ENCODE measurements at regions of chr5 and their contacts with region 1.

Region 1: DNA sequence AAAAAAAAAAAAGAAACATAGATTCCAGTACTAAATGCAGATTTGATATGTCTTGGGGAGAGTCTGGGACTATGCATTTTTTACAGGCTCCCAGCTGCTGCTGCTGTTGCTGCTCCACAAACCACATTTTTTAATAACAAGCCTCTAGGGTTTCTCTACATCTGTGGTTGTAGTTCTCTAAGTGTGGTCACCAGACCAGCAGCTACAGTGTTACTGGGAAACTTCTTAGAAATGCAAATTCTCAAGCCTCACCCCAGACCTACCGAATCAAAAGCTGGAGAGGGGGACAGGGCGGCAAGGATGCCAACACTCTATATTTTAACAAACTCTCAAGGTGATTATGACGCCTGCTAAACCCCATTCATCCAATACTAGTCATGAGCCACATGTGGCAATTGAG is 293.4 kb upstream of the PTGER4 start:
- DNase-seq: no peak
- H3K4me3 ChIP-seq: no peak overlapping the region
- H3K27ac ChIP-seq: peak overlapping the region; percentile 91
- H3K4me1 ChIP-seq: peaks cover 56% of the 10 kb centered on the region
- H3K27me3 ChIP-seq: no peaks in the 10 kb centered on the region
- CTCF ChIP-seq: no peak

Region 2: DNA sequence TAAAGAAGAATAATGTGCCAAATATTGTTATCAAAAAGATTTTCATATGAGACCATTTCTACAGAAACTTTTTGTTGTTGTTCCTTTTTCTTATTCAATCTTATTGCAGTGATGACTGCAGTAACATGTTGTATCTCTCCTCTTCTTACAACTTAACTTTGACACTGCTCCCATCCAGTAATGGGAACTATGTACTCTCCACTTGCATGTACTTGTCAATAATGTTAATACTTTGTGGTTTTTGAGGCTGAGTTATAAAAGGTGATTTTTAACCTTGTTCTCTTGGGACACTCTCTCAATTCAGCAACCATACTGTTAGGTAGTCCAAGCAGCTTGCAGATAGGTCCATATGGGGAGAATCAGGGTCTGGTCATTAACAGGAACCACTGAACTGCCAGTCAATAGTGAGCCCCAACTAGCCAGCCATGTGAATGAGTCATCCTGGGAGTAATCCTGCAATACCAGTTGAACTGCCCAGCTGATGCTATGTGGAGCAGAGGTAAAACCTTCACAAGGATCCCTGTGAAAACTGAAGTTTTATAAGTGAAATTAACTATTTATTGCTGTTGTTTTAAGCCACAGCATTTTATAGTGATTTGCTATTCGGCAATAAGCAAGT is 761.9 kb before region 1 on chr5:
- CTCF ChIA-PET with region 1: no interaction called
- POLR2A ChIA-PET with region 1: no interaction called
- intact Hi-C with region 1: loop called (anchors 10 kb)
- DNase-seq: peak; percentile 87 to 96
- H3K4me3 ChIP-seq: peak overlapping the region; percentile 46
- H3K27ac ChIP-seq: peak overlapping the region; percentile 78
- H3K4me1 ChIP-seq: peaks cover 35% of the 10 kb centered on the region
- H3K27me3 ChIP-seq: no peaks in the 10 kb centered on the region
- CTCF ChIP-seq: no peak

Region 3: DNA sequence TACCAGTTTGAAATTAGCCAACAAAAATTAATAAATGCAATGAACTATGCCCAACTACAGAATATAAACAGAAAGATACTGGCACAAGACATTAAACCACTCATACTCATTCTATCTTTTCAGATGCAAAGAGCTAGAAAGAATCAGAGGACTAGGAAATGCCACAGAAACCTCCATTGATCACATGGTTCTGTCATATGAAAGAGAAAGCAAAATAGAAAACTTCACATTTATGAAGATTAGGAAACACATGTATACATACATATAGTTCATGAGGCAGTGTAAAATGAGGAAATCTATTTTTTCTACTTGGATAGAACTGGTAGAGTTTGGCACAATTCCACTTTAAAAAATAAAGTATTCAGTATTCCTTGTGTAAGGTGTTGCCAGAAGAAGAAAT is 18.3 kb after region 1 on chr5:
- CTCF ChIA-PET with region 1: interaction called, 3 read pairs
- POLR2A ChIA-PET with region 1: interaction called, 5 read pairs
- intact Hi-C with region 1: loop called (anchors 1 kb)
- DNase-seq: no peak
- H3K4me3 ChIP-seq: no peak overlapping the region
- H3K27ac ChIP-seq: 0 out of 2 replicates have a peak overlapping the region, but pooled peaks have one; percentile 8
- H3K4me1 ChIP-seq: peaks cover 40% of the 10 kb centered on the region
- H3K27me3 ChIP-seq: no peaks in the 10 kb centered on the region
- CTCF ChIP-seq: no peak

Region 4: DNA sequence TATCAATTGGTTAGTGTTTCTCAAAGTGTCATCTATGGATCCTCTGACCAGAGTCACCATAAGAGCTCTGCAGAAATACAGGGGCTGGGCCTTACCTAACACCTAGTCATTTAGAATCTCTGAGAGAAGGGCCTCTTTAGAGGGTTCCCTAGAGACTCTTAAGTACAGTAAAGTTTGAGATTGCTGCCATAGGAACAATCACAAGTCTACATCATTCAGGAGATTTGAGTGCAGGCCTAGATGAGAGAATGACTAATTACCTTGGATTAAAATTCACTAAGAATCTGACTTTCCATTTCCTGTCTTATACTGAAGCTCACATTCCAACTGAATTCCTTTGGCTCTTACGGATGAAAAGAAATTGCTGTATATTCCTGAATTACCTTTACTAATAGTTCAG is 111.3 kb after region 1 on chr5:
- CTCF ChIA-PET with region 1: no interaction called
- POLR2A ChIA-PET with region 1: interaction called, 5 read pairs
- intact Hi-C with region 1: loop called (anchors 5 kb)
- DNase-seq: peak in 1 of 2 experiments; percentile 46
- H3K4me3 ChIP-seq: no peak overlapping the region
- H3K27ac ChIP-seq: no peak overlapping the region
- H3K4me1 ChIP-seq: no peaks in the 10 kb centered on the region
- H3K27me3 ChIP-seq: no peaks in the 10 kb centered on the region
- CTCF ChIP-seq: no peak

Region 5: DNA sequence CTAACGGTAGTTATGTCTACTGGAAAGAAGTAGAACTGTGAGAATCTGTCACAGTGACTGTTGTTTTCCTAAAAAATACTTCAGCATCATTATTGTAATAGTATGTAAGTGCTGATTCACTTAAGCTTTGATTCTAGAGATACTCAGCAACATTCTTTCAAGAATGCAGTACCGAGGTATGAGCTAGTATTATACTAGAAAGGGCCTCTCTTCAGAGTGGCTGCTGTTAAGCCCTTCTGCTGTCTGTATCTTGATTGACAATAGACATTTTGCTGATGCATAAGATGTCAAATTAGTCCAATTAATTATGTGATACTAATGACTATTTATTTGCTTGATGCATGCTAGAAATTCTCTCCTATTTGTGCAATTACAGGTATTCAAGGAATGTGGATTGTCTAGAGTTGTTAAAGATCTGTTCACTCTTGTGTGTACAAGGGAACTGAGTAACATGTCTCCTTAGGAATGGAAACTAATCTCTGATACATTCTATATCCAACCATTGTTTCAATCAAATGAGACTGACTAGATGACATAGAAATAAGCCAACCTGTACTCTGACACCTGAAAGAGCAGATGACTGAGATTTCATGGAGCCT is 201.1 kb after region 1 on chr5:
- CTCF ChIA-PET with region 1: no interaction called
- POLR2A ChIA-PET with region 1: no interaction called
- intact Hi-C with region 1: loop called (anchors 2 kb)
- DNase-seq: peak; percentile 28 to 93
- H3K4me3 ChIP-seq: no peak overlapping the region
- H3K27ac ChIP-seq: peak overlapping the region; percentile 49
- H3K4me1 ChIP-seq: peaks cover 19% of the 10 kb centered on the region
- H3K27me3 ChIP-seq: no peaks in the 10 kb centered on the region
- CTCF ChIP-seq: no peak

Region 6: DNA sequence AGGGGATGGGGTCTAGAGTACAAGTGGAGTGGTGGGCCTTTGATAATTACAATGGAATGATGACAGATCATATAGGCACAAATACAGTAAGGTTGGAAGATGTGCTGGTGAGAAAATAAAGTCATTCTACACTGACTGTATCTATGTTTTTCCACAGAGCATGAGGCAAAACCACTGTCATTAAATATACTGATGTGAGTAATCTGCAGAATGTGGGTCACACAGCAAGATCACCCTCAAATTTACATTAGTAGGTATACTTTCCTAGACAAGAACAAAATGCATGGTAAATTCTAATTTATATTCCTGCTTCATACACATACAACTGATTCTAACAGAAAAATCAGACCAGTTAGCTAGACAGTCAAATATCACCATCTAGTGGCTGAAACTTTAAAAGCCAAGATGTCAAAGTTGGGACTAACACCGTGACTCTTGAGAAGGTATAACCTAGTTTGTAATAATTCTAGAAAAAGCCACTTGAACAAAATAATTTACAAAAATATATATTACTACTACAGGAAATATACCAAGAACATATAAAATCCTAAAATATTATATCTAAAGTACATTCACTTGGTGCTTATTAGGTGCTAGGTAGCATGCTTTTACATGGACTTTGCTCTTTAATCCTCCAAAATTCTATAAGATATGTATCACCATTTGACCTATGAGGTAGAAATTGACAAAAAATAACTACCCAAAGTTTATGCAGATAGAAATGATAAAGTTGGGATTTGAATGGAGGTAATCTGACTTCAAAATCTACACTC is 350.0 kb after region 1 on chr5:
- CTCF ChIA-PET with region 1: no interaction called
- POLR2A ChIA-PET with region 1: no interaction called
- intact Hi-C with region 1: loop called (anchors 1 kb)
- DNase-seq: peak in 1 of 2 experiments; percentile 56
- H3K4me3 ChIP-seq: no peak overlapping the region
- H3K27ac ChIP-seq: no peak overlapping the region
- H3K4me1 ChIP-seq: 0 out of 2 replicates have a peak, but pooled peaks cover 8% of the 10 kb centered on the region
- H3K27me3 ChIP-seq: no peaks in the 10 kb centered on the region
- CTCF ChIP-seq: peak; percentile 91